ENCODE measurements at regions of chr11 and their contacts with region 1.

Region 1: GRCh38 chr11:207208-207862 is at the starts of genes BET1L and RIC8A:
- DNase-seq: peak; percentile 93 to 100 (median 97)
- ATAC-seq: peak; percentile 76
- H3K4me3 ChIP-seq: peak within 1 kb of the TSS; percentile 83 to 89
- H3K4me3 Mint-ChIP-seq: peak within 1 kb of the TSS; percentile 99
- H3K27ac ChIP-seq: peak within 1 kb of the TSS; percentile 91 to 97
- H3K27ac Mint-ChIP-seq: peak within 1 kb of the TSS; percentile 100
- H3K4me1 ChIP-seq: peaks cover 54% of the 10 kb centered on the region
- H3K4me1 Mint-ChIP-seq: peaks cover 58% of the 10 kb centered on the region
- H3K27me3 ChIP-seq: no peaks in the 10 kb centered on the region
- H3K27me3 Mint-ChIP-seq: no peaks in the 10 kb centered on the region
- CTCF ChIP-seq: no peak
- total RNA-seq, gene BET1L: 58.0 to 60.9 TPM
- total RNA-seq, gene RIC8A: 165 to 176 TPM

Region 2: GRCh38 chr11:236774-237767 is 29.7 kb after region 1 on chr11 and contains the start of gene PSMD13:
- CTCF ChIA-PET with region 1: interaction called, 4 read pairs
- POLR2A ChIA-PET with region 1: interaction called, 37 read pairs
- intact Hi-C with region 1: loop called (anchors 1 kb)
- DNase-seq: peak; percentile 74 to 94 (median 88)
- ATAC-seq: peak; percentile 72
- H3K4me3 ChIP-seq: peak within 1 kb of the TSS; percentile 83 to 100
- H3K4me3 Mint-ChIP-seq: peak within 1 kb of the TSS; percentile 96
- H3K27ac ChIP-seq: peak within 1 kb of the TSS; percentile 99 to 100
- H3K27ac Mint-ChIP-seq: peak within 1 kb of the TSS; percentile 99
- H3K4me1 ChIP-seq: peaks cover 24% of the 10 kb centered on the region
- H3K4me1 Mint-ChIP-seq: peaks cover 59% of the 10 kb centered on the region
- H3K27me3 ChIP-seq: no peaks in the 10 kb centered on the region
- H3K27me3 Mint-ChIP-seq: no peaks in the 10 kb centered on the region
- CTCF ChIP-seq: no peak
- total RNA-seq, gene PSMD13: 74.3 to 82.8 TPM

Region 3: GRCh38 chr11:279966-280582 is 72.7 kb after region 1 on chr11:
- CTCF ChIA-PET with region 1: no interaction called
- POLR2A ChIA-PET with region 1: interaction called, 36 read pairs
- intact Hi-C with region 1: no loop called
- DNase-seq: peak in 6 of 9 experiments; percentile 60 to 77 (median 67)
- ATAC-seq: peak; percentile 62
- H3K4me3 ChIP-seq: peak overlapping the region; percentile 56 to 70
- H3K4me3 Mint-ChIP-seq: peak overlapping the region; percentile 89
- H3K27ac ChIP-seq: peak overlapping the region in 1 of 2 experiments; percentile 57
- H3K27ac Mint-ChIP-seq: peak overlapping the region; percentile 89
- H3K4me1 ChIP-seq: peaks cover 49% of the 10 kb centered on the region
- H3K4me1 Mint-ChIP-seq: peaks cover 55% of the 10 kb centered on the region
- H3K27me3 ChIP-seq: peaks cover 0 to 11% of the 10 kb centered on the region in 2 experiments
- H3K27me3 Mint-ChIP-seq: no peaks in the 10 kb centered on the region
- CTCF ChIP-seq: no peak

Region 4: GRCh38 chr11:355581-356458 is 148.5 kb after region 1 on chr11:
- CTCF ChIA-PET with region 1: no interaction called
- POLR2A ChIA-PET with region 1: interaction called, 6 read pairs
- intact Hi-C with region 1: loop called in 1 of 2 experiments (anchors 1 kb)
- DNase-seq: peak; percentile 64 to 94 (median 85)
- ATAC-seq: peak; percentile 61
- H3K4me3 ChIP-seq: peak overlapping the region; percentile 32 to 66
- H3K4me3 Mint-ChIP-seq: peak overlapping the region; percentile 84
- H3K27ac ChIP-seq: peak overlapping the region; percentile 76 to 86
- H3K27ac Mint-ChIP-seq: peak overlapping the region; percentile 95
- H3K4me1 ChIP-seq: peaks cover 43% of the 10 kb centered on the region
- H3K4me1 Mint-ChIP-seq: peaks cover 44% of the 10 kb centered on the region
- H3K27me3 ChIP-seq: no peaks in the 10 kb centered on the region
- H3K27me3 Mint-ChIP-seq: no peaks in the 10 kb centered on the region
- CTCF ChIP-seq: no peak

Region 5: DNA sequence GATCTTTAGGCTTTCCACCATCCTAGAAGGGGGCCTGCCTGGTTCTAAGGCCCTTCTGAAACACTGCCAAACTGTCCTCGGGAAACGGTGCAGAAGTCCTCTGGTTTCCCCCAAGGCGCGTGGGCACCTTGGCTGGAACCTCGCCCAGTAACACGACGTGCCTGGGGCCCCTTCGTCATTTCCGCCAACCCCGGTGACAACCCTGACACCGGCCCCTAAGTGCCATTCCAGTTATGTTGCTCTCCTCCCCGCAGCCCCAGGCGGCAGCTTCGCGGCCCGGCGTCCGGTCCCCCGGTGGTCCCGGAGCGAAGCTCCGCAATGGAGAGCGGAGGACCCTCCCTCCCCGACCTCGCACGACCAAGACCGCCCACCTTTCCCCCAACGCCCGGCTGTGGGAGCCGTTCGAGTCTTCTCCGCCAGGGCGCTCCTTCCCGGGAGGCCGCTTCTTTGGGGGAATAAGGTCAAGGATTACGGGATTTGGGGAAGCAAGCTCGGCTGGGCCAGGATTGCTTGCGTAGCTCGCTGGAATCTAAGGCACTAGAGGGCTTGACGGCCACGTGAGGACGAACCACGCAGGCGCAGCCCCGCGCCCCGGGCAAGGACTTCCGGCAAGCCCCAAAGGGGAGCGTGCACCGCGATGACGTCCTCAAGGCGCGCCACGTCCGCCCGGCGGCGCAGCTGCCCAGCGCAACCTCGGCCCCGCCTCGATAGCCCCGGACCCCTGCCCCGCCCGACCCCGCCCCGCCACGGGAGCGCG is 299.1 kb after region 1 on chr11:
- CTCF ChIA-PET with region 1: no interaction called
- POLR2A ChIA-PET with region 1: interaction called, 7 read pairs
- intact Hi-C with region 1: loop called (anchors 1 to 5 kb)
- DNase-seq: peak; percentile 93 to 99 (median 98)
- ATAC-seq: peak; percentile 67
- H3K4me3 ChIP-seq: peak overlapping the region; percentile 93 to 99
- H3K4me3 Mint-ChIP-seq: peak overlapping the region; percentile 97
- H3K27ac ChIP-seq: peak overlapping the region; percentile 99 to 100
- H3K27ac Mint-ChIP-seq: peak overlapping the region; percentile 99
- H3K4me1 ChIP-seq: peaks cover 36% of the 10 kb centered on the region
- H3K4me1 Mint-ChIP-seq: peaks cover 25% of the 10 kb centered on the region
- H3K27me3 ChIP-seq: no peaks in the 10 kb centered on the region
- H3K27me3 Mint-ChIP-seq: no peaks in the 10 kb centered on the region
- CTCF ChIP-seq: no peak

Region 6: GRCh38 chr11:809287-810039 is 602.1 kb after region 1 on chr11 and contains the start of gene RPLP2:
- CTCF ChIA-PET with region 1: no interaction called
- POLR2A ChIA-PET with region 1: interaction called, 4 read pairs
- intact Hi-C with region 1: loop called (anchors 5 kb)
- DNase-seq: peak; percentile 93 to 99 (median 98)
- ATAC-seq: peak; percentile 80
- H3K4me3 ChIP-seq: peak within 1 kb of the TSS; percentile 85 to 96
- H3K4me3 Mint-ChIP-seq: peak within 1 kb of the TSS; percentile 94
- H3K27ac ChIP-seq: peak within 1 kb of the TSS; percentile 80 to 100
- H3K27ac Mint-ChIP-seq: peak within 1 kb of the TSS; percentile 97
- H3K4me1 ChIP-seq: peaks cover 37% of the 10 kb centered on the region
- H3K4me1 Mint-ChIP-seq: peaks cover 25% of the 10 kb centered on the region
- H3K27me3 ChIP-seq: no peaks in the 10 kb centered on the region
- H3K27me3 Mint-ChIP-seq: no peaks in the 10 kb centered on the region
- CTCF ChIP-seq: no peak
- total RNA-seq, gene RPLP2: 5,702 to 5,720 TPM

Region 7: GRCh38 chr11:942823-943222 is 735.5 kb after region 1 on chr11:
- CTCF ChIA-PET with region 1: no interaction called
- POLR2A ChIA-PET with region 1: no interaction called
- intact Hi-C with region 1: no loop called
- DNase-seq: no peak
- ATAC-seq: no peak
- H3K4me3 ChIP-seq: no peak overlapping the region
- H3K4me3 Mint-ChIP-seq: no peak overlapping the region
- H3K27ac ChIP-seq: no peak overlapping the region
- H3K27ac Mint-ChIP-seq: no peak overlapping the region
- H3K4me1 ChIP-seq: peaks cover 18% of the 10 kb centered on the region
- H3K4me1 Mint-ChIP-seq: peaks cover 50% of the 10 kb centered on the region
- H3K27me3 ChIP-seq: no peaks in the 10 kb centered on the region
- H3K27me3 Mint-ChIP-seq: no peaks in the 10 kb centered on the region
- CTCF ChIP-seq: no peak

Measured in CD8-positive, alpha-beta T cell (primary cell).